ENCODE measurements at regions of chr10 and their contacts with region 1.

Region 1: DNA sequence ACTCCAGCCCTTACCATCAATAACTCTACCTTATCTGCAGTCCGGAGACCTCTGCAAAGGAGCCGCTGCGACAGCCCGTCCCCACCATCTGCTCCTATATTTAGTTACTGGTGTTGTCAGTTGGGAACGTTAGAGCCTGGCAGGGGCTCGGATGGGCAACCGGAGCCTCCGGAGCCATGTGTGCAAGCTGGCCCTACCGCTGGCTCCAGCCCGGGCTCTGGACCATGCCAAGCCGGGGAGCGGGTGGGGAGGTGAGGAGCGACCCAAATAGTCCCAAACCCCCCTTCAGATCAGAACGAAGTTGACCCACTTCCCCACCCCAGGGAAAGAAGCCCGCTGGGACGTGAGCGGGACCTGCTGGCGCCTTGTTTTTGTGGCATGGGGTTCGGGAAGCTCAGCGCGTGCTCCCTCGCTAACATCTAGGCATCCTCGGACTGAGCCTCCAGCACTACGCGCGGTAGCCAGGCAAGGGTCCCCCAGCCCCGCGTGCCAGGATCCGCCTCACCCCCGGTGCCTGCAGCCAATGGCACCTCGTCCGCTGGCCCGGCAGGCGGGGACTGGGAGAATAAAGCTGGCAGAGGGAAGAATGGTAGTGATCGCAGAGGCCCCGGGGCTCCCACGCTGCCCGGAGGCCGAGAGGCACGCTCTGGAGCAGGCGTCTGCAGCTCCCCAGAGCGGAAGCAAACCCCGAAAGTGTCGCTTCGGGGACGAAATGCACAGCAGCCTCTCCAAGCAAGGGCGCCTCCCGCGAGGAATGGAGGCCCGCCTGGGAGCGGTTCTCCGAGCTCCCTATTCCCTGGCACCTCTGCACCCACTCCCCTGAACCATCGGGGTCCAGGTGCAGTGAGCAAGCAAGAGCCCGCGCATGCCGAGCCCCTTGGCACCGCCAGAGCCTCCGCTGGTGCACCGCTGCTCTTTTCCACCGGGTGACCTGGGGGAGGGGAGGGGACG is 679 bp downstream of the LRRC20 start:
- DNase-seq: no peak
- ATAC-seq: peak; percentile 49
- H3K4me3 ChIP-seq: peak overlapping the region; percentile 71 to 87 (median 75)
- H3K27ac ChIP-seq: no peak overlapping the region
- H3K4me1 ChIP-seq: peaks cover 41% of the 10 kb centered on the region
- H3K27me3 ChIP-seq: peaks cover 2 to 23% of the 10 kb centered on the region in 2 experiments; a peak in 3 of 5 replicates
- CTCF ChIP-seq: no peak; the same call in 1 of the 2 replicates
- EP300 ChIP-seq: no peak
- POLR2A ChIP-seq: no peak
- RAD21 ChIP-seq: no peak

Region 2: GRCh38 chr10:70430493-70431445 is 49.0 kb after region 1 on chr10:
- CTCF ChIA-PET with region 1: no interaction called
- POLR2A ChIA-PET with region 1: no interaction called
- in situ Hi-C with region 1: no loop called
- intact Hi-C with region 1: loop called (anchors 5 kb)
- DNase-seq: peak; percentile 80
- ATAC-seq: peak; percentile 80
- H3K4me3 ChIP-seq: no peak overlapping the region
- H3K27ac ChIP-seq: no peak overlapping the region
- H3K4me1 ChIP-seq: peaks cover 29% of the 10 kb centered on the region
- H3K27me3 ChIP-seq: no peaks in the 10 kb centered on the region
- CTCF ChIP-seq: peak; percentile 80
- EP300 ChIP-seq: no peak
- POLR2A ChIP-seq: no peak
- RAD21 ChIP-seq: peak; percentile 46; the same call in 1 of the 2 replicates

Measured in HepG2 (cell line).